Activated naive CD8-positive, alpha-beta T cell treated with anti-CD3 and anti-CD28 coated beads, Interleukin-2, amount 10 ng/mL, durations not matched to agents 7 days and 5 days (primary cell): ENCODE measurements at regions of chr19 and their contacts with region 1.

Region 1: GRCh38 chr19:11924886-11925650 is at the start of gene ZNF700:
- DNase-seq: peak; percentile 89
- ATAC-seq: peak; percentile 85
- H3K4me3 Mint-ChIP-seq: peak within 1 kb of the TSS; percentile 90
- H3K27ac Mint-ChIP-seq: peak within 1 kb of the TSS; percentile 100
- H3K4me1 Mint-ChIP-seq: peaks cover 31% of the 10 kb centered on the region
- H3K27me3 Mint-ChIP-seq: no peaks in the 10 kb centered on the region
- total RNA-seq, gene ZNF700: 24.7 to 26.1 TPM

Region 2: DNA sequence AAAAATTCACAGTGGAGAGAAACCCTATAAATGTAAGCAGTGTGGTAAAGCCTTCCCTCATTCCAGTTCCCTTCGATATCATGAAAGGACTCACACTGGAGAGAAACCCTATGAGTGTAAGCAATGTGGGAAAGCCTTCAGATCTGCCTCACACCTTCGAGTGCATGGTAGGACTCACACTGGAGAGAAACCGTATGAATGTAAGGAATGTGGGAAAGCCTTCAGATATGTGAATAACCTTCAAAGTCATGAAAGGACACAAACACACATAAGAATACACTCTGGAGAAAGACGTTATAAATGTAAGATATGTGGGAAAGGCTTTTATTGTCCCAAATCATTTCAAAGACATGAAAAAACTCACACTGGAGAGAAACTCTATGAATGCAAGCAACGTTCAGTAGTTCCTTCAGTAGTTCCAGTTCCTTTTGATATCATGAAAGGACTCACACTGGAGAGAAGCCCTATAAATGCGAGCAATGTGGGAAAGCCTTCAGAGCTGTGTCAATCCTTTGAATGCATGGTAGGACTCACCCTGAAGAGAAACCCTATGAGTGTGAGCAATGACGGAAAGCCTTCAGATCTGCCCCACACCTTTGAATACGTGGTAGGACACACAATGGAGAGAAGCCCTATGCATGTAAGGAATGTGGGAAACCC is 92.7 kb before region 1 on chr19:
- POLR2A ChIA-PET with region 1: no interaction called
- DNase-seq: no peak
- ATAC-seq: no peak
- H3K4me3 Mint-ChIP-seq: no peak overlapping the region
- H3K27ac Mint-ChIP-seq: no peak overlapping the region
- H3K4me1 Mint-ChIP-seq: no peaks in the 10 kb centered on the region
- H3K27me3 Mint-ChIP-seq: no peaks in the 10 kb centered on the region

Region 3: GRCh38 chr19:11964858-11965645 is 40.0 kb after region 1 on chr19 and contains the start of gene ZNF763:
- POLR2A ChIA-PET with region 1: interaction called, 20 read pairs
- DNase-seq: peak; percentile 88
- ATAC-seq: peak; percentile 93
- H3K4me3 Mint-ChIP-seq: peak within 1 kb of the TSS; percentile 96
- H3K27ac Mint-ChIP-seq: peak within 1 kb of the TSS; percentile 93
- H3K4me1 Mint-ChIP-seq: peaks cover 20% of the 10 kb centered on the region
- H3K27me3 Mint-ChIP-seq: no peaks in the 10 kb centered on the region
- total RNA-seq, gene ZNF763: 5.2 to 6.1 TPM

Region 4: DNA sequence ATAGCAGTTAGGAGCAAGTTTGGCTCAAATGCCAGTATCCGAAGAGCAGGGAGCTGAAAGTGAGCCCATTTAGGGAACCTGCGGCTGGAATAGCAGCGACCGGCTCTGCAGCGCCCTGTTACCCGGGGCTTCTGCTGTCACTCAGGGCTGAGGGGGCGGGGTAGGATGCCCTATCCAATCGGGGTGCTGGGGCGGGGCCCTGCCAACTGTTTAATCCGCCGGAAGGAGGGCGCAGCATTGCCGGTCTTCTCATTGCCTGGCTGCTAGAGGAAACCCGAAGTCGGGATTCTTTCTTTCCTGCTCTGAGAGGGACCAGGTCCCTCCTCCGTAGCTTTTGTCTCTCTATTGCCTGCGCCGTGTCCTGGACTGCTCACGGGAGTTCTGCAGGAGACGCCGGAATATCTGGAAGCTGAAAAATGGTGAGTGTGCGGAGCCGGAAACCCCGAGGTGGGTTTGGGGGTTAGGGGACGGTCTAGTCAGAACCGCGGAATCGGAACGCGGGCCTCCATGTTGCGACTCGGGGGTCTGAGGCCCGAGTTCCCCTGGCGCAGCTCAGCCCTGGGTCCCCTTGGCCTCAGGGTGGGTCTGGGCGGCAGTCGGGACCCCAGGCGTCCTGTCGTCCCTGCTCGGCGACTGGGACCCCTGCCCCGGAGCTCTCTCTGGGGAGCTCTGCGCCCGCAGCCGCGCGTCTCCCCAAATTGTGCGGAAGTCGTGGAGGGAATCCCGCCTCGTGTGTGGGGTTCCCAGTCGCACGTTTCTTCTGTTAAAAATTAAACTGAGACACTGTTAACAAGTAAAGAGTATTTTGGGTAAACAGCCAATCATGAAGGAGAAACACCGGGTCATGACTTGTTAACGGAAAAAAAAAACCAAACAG is 62.6 kb after region 1 on chr19:
- POLR2A ChIA-PET with region 1: interaction called, 69 read pairs
- DNase-seq: peak; percentile 91
- ATAC-seq: peak; percentile 92
- H3K4me3 Mint-ChIP-seq: peak overlapping the region; percentile 95
- H3K27ac Mint-ChIP-seq: peak overlapping the region; percentile 97
- H3K4me1 Mint-ChIP-seq: peaks cover 18% of the 10 kb centered on the region
- H3K27me3 Mint-ChIP-seq: no peaks in the 10 kb centered on the region

Region 5: GRCh38 chr19:12052497-12053169 is 127.6 kb after region 1 on chr19 and contains the start of gene ZNF878:
- POLR2A ChIA-PET with region 1: interaction called, 12 read pairs
- DNase-seq: peak; percentile 72
- ATAC-seq: peak; percentile 91
- H3K4me3 Mint-ChIP-seq: peak within 1 kb of the TSS; percentile 85
- H3K27ac Mint-ChIP-seq: peak within 1 kb of the TSS; percentile 80
- H3K4me1 Mint-ChIP-seq: peaks cover 9% of the 10 kb centered on the region
- H3K27me3 Mint-ChIP-seq: peaks cover 21% of the 10 kb centered on the region
- total RNA-seq, gene ZNF878: 0.91 to 1.2 TPM

Region 6: DNA sequence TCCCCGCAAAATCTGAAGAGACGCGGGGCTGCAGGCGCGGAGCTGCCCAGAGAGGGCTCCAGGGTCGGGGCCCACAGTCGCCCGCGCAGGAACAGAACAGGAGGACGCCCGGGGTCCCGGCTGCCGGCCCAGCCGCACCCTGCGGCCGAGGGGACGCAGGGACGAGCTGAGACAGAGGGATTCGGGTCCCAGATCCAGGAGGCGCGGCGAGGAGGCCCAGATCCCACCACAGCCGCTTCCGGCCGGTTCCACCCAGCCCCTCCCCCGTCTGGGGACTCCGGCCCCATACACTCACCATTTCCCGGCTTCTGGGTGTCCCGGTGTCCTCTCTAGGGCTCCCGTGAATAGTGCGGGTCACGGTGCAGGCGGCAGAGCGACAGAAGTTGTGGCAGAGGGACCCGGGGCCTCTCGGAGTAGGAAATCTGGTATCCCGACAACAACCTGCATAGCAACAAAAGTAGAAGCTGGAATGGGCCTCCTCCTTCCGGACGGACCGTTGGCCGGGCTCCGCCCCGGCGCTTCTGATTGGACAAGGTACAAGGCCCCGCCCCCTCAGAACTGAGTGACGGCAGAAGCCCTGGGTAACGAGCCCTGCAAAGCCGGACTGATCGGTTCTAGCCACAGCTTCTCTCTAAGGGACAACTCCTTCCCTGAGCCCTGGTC is 214.9 kb after region 1 on chr19 and contains the start of gene ZNF20:
- POLR2A ChIA-PET with region 1: interaction called, 13 read pairs
- DNase-seq: peak; percentile 90
- ATAC-seq: peak; percentile 91
- H3K4me3 Mint-ChIP-seq: peak within 1 kb of the TSS; percentile 94
- H3K27ac Mint-ChIP-seq: peak within 1 kb of the TSS; percentile 67
- H3K4me1 Mint-ChIP-seq: peaks cover 23% of the 10 kb centered on the region
- H3K27me3 Mint-ChIP-seq: no peaks in the 10 kb centered on the region
- total RNA-seq, gene ZNF20: 5.9 to 7.2 TPM